ENCODE measurements at regions of chr6 and their contacts with region 1.

Region 1: DNA sequence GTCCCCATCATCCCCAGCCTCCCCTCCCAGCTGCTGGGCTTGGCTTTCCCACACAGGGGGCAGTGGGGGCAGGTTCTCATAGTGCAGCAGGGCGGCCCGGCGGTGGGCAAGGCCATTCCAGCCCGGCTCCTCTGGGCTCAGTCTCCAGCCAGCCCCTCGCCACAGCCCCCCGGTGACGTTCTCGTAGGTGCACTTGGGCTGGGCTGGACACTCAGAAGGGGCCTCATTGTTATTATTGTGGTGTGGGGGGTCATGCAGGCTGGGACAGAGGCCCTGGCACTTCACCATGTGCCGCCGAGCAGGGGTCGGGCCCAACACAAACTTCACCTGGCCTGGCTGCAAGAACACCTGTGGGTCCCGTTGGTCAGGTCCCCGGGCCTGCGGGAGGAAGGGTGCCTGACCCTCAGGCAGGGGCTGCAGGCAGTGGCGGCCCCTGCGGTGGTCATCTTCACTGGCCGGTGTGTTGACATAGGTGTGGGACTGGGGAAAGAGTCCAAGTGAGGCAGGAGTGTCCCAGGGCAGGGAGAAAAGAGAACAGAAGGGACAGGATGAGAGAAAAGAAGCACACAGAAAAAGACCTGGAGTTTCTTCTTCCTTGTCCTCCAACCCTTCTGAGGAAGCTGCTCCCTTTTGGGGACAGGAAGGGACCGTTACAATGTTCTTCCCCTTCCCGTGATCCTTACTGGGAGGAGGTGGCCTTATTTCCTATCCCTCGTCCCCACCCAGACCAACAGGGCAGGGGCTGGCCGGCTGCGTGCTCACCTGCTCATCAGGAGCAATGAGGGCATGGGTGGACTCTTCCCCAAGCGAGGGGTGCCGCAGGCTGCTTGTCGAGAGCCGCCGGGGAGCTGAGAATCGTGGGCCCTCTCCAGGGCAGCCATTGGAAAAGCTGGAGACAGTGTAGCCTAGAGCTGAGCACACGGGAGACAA is 8.4 kb downstream of the FRS3 start:
- DNase-seq: no peak
- H3K4me3 ChIP-seq: no peak overlapping the region
- H3K27ac ChIP-seq: peak overlapping the region in 1 of 5 donors; percentile 7
- H3K4me1 ChIP-seq: peaks cover 25 to 63% (median 43%) of the 10 kb centered on the region in 4 donors
- H3K27me3 ChIP-seq: no peaks in the 10 kb centered on the region
- CTCF ChIP-seq: no peak
- EP300 ChIP-seq: no peak
- POLR2A ChIP-seq: no peak

Region 2: GRCh38 chr6:41424370-41425058 is 346.8 kb before region 1 on chr6:
- intact Hi-C with region 1: no loop called
- DNase-seq: peak; percentile 93
- H3K4me3 ChIP-seq: no peak overlapping the region
- H3K27ac ChIP-seq: peak overlapping the region in 4 of 5 donors; percentile 70 to 95 (median 88)
- H3K4me1 ChIP-seq: peaks cover 36 to 53% (median 49%) of the 10 kb centered on the region in 4 donors
- H3K27me3 ChIP-seq: peaks cover 0 to 32% (median 14%) of the 10 kb centered on the region in 3 donors
- CTCF ChIP-seq: peak in 6 of 7 experiments; percentile 26 to 94 (median 90)
- EP300 ChIP-seq: no peak
- POLR2A ChIP-seq: no peak

Region 3: GRCh38 chr6:41602864-41603608 is 168.3 kb before region 1 on chr6:
- intact Hi-C with region 1: no loop called
- DNase-seq: peak; percentile 79 to 96
- H3K4me3 ChIP-seq: peak overlapping the region in 1 of 4 donors; percentile 6
- H3K27ac ChIP-seq: peak overlapping the region in 3 of 5 donors; percentile 23 to 62 (median 46)
- H3K4me1 ChIP-seq: peaks cover 3 to 30% (median 22%) of the 10 kb centered on the region in 4 donors
- H3K27me3 ChIP-seq: peaks cover 0 to 7% (median 0%) of the 10 kb centered on the region in 3 donors
- CTCF ChIP-seq: peak in 5 of 7 experiments; percentile 82 to 89 (median 84)
- EP300 ChIP-seq: no peak
- POLR2A ChIP-seq: no peak

Region 4: GRCh38 chr6:41697861-41698781 is 73.2 kb before region 1 on chr6:
- intact Hi-C with region 1: loop called (anchors 5 kb)
- DNase-seq: peak in 1 of 2 donors; percentile 56
- H3K4me3 ChIP-seq: no peak overlapping the region
- H3K27ac ChIP-seq: peak overlapping the region in 2 of 5 donors; percentile 42 to 45
- H3K4me1 ChIP-seq: peaks cover 4 to 21% (median 12%) of the 10 kb centered on the region in 4 donors
- H3K27me3 ChIP-seq: no peaks in the 10 kb centered on the region
- CTCF ChIP-seq: no peak
- EP300 ChIP-seq: no peak
- POLR2A ChIP-seq: no peak

Region 5: DNA sequence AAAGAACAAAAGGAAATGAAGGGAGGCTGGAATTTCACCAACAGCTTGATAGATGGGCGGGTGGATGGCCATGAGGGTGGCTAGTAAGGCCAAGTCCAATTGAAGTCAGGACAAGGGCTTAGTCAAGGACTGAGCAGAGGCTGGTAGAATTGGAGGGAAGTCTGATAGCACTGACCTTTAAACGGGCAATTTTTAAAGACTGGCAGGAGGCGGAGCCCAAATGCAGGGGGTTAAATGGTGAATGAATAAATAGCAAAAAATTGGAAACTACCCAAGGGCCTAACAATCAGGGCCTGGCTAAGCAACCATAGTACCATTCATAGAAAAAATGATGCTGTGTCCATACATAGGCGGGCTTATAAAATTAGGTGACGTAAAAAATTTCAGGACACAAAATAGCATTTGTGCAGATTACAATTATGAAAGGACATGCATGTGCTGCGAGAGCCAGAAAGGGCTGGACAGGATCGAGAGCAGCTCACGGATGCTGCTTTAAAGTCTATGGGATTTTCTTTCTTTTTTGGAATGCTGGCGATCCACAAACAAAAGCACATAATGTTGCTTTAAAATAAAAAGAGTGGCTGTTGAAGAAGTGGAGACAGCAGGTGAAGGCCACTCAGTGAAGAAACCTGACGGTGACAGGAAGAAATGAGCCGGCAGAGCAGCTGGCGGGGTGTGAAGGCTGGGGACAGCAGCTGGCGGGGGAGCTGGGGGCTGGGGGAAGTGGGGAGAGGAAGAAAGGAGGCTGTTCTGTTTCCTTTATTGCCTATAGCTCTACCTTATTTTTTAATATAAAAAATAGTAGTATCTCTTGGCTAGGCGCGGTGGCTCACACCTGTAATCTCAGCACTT is 236.2 kb after region 1 on chr6:
- intact Hi-C with region 1: no loop called
- DNase-seq: peak in 1 of 2 donors; percentile 59
- H3K4me3 ChIP-seq: no peak overlapping the region
- H3K27ac ChIP-seq: no peak overlapping the region
- H3K4me1 ChIP-seq: peaks cover 6 to 37% (median 23%) of the 10 kb centered on the region in 4 donors
- H3K27me3 ChIP-seq: no peaks in the 10 kb centered on the region
- CTCF ChIP-seq: no peak
- EP300 ChIP-seq: no peak
- POLR2A ChIP-seq: no peak